Posterior vena cava (tissue), 2 donors: ENCODE measurements at regions of chr17 and their contacts with region 1.

Region 1: GRCh38 chr17:45848867-45849541 is 4.3 kb downstream of the SPPL2C start:
- DNase-seq: no peak

Region 2: GRCh38 chr17:45648642-45649041 is 200.4 kb before region 1 on chr17:
- intact Hi-C with region 1: loop called in 1 of 2 experiments (anchors 5 kb)
- DNase-seq: peak; percentile 40

Region 3: DNA sequence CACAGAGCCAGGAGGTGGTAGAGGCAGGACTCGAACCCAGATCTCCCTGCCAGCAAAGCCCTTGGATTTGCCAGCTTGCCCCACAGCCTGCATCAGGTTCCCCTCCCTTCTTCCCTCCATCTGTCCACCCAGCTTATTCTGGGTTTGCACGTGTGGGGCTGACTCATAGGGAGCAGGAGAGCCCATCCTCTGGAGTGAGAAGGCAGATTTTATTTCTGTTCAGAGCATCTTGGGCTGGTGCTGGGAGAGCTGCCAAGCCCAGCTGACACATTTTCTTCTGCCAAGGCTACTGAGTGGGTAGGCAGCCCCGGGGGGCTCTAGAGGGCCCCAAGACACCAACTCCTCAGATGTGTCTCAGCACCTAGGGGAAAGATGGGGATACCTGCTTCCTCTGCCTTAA is 171.2 kb before region 1 on chr17:
- intact Hi-C with region 1: no loop called
- DNase-seq: peak; percentile 53

Region 4: DNA sequence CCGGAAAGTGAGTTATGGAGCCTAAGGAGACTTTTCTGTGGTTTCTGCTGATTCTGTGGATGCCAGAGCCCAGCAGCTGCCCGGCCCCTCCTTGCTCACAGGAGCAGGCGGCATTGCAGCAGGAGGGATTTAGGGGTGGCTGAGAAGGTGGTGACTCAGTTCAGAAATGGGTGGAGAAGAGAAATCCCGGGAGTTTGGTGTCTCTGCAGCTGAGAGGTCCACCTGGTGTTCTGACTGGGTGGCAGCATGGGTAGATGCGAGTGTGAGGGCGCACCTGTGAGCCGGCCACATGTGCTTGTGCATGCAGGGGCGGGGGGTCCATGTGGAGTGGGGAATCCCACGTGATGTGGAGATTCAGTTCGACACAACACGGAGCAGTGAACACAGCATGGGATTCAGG is 20.4 kb before region 1 on chr17:
- intact Hi-C with region 1: no loop called
- DNase-seq: no peak